Gastrocnemius medialis (tissue), 4 donors: ENCODE measurements at regions of chr10 and their contacts with region 1.

Region 1: DNA sequence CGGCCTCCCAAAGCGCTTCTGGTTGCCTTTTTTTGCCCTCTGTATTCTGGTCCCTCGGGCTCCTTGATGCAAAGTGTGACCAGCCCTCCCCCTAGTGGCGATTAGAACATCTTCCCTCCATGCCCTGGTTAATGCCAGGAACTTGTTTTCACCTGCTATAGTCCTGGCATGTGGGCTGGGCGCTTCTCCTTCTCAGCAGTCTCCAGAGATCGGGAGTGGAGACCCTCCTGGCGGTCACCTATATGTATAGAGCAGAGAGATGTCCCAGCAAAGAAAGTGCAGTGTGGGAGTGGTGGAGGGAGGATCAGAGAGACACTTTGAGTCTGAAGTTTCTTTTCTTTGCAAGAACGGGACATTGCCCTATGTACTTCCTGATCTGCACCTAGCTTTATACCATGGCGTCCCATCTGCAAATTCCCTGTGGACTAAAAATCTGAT is 264.1 kb downstream of the OTUD1 start:
- DNase-seq: peak in 1 of 2 donors; percentile 21
- ATAC-seq: peak in 1 of 2 donors; percentile 78
- H3K4me3 ChIP-seq: no peak overlapping the region
- H3K27ac ChIP-seq: no peak overlapping the region
- H3K4me1 ChIP-seq: no peaks in the 10 kb centered on the region
- H3K27me3 ChIP-seq: peaks cover 0 to 3% (median under 1%) of the 10 kb centered on the region in 3 donors
- CTCF ChIP-seq: peak; percentile 23 to 66 (median 51)
- POLR2A ChIP-seq: no peak

Region 2: DNA sequence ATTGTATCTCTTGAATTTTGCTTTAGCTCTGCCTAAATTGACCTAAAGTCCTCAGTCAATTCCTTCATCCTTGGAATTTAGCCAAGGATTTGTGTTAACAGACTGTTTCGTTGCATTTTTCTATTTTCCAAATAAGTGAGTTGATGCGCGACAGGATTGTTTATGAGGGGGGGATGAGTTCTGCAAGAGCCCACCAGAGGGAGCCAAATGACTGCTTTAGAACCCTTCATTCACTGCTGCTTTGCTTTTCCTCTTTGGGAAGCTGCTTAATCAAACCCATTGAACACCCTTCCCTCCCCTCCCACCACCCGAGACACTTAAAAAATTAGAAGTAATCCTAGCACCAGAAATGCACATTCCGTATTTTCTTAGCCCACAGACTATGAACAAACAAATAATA is 544.6 kb before region 1 on chr10:
- in situ Hi-C with region 1: no loop called
- intact Hi-C with region 1: loop called (anchors 2 kb)
- DNase-seq: no peak
- ATAC-seq: peak; percentile 50 to 60
- H3K4me3 ChIP-seq: no peak overlapping the region
- H3K27ac ChIP-seq: no peak overlapping the region
- H3K4me1 ChIP-seq: no peaks in the 10 kb centered on the region
- H3K27me3 ChIP-seq: peaks cover 0 to 5% (median 0%) of the 10 kb centered on the region in 3 donors
- CTCF ChIP-seq: peak; percentile 31 to 77 (median 61)
- POLR2A ChIP-seq: no peak

Region 3: DNA sequence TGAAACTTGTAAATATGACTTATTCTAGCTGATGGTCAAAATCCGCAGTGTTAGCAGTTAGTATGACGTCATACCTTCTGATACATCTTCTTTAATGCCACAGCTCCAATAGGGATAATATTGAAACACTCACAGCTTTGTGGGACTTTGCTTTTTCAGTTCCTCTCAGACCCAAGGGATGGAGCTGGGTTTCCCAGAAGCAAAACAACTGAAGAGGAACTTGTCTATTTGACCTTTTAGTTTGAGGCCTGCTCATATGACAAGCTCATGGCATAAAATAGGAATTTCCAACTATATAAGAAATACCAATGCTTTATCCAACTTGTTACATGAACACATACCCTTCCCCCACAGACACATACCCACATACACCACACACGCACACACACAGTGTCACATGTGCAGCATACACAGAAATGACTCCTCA is 326.8 kb before region 1 on chr10:
- in situ Hi-C with region 1: no loop called
- intact Hi-C with region 1: no loop called
- DNase-seq: no peak
- ATAC-seq: no peak
- H3K4me3 ChIP-seq: no peak overlapping the region
- H3K27ac ChIP-seq: no peak overlapping the region
- H3K4me1 ChIP-seq: no peaks in the 10 kb centered on the region
- H3K27me3 ChIP-seq: no peaks in the 10 kb centered on the region
- CTCF ChIP-seq: no peak
- POLR2A ChIP-seq: no peak